Gastrocnemius medialis (tissue), 4 donors: ENCODE measurements at regions of chr9 and their contacts with region 1.

Region 1: DNA sequence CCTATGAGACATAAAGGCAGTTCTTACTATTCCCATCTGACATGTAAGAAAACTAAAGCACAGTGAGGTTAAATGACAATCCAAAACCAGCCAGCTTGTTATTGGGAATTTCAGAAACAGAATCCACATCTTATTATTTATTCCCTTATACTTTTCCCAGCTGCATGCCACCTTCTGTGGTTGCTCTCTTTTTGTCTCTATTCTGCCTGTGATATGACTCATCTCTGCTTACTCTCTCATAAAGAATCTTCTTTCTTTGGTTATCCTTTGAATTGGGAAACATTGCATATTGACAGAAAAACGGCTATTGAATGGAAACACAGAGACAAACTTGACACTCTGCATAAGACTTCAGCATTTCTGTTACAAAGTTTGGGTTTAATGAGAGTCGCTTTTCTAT is 183.2 kb downstream of the TLR4 start:
- DNase-seq: no peak
- ATAC-seq: no peak
- H3K4me3 ChIP-seq: no peak overlapping the region
- H3K27ac ChIP-seq: no peak overlapping the region
- H3K4me1 ChIP-seq: no peaks in the 10 kb centered on the region
- H3K27me3 ChIP-seq: no peaks in the 10 kb centered on the region
- CTCF ChIP-seq: no peak
- POLR2A ChIP-seq: no peak

Region 2: DNA sequence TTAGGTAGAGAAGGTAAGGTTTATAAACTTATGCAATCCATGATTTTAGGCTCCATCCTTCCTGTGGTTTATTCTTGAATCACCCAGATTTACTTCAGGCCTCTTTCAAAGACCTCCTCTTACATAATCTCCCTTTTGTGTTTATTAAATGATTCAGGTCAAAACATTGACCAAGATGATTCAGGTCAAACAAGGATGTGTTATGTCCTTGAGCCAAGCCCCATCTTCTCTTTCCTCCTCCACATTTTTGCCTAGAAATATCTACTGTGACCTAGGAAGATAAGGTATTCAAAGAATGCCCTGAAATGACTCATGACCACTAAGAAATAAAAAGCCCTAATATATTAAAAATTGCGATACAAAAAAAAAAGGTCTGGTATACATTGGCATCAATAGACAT is 215.0 kb before region 1 on chr9:
- in situ Hi-C with region 1: loop called in 1 of 4 experiments (anchors 25 kb)
- intact Hi-C with region 1: no loop called
- DNase-seq: no peak
- ATAC-seq: no peak
- H3K4me3 ChIP-seq: no peak overlapping the region
- H3K27ac ChIP-seq: no peak overlapping the region
- H3K4me1 ChIP-seq: no peaks in the 10 kb centered on the region
- H3K27me3 ChIP-seq: no peaks in the 10 kb centered on the region
- CTCF ChIP-seq: no peak
- POLR2A ChIP-seq: no peak